Panc1 (cell line): ENCODE measurements at regions of chr4 and their contacts with region 1.

Region 1: DNA sequence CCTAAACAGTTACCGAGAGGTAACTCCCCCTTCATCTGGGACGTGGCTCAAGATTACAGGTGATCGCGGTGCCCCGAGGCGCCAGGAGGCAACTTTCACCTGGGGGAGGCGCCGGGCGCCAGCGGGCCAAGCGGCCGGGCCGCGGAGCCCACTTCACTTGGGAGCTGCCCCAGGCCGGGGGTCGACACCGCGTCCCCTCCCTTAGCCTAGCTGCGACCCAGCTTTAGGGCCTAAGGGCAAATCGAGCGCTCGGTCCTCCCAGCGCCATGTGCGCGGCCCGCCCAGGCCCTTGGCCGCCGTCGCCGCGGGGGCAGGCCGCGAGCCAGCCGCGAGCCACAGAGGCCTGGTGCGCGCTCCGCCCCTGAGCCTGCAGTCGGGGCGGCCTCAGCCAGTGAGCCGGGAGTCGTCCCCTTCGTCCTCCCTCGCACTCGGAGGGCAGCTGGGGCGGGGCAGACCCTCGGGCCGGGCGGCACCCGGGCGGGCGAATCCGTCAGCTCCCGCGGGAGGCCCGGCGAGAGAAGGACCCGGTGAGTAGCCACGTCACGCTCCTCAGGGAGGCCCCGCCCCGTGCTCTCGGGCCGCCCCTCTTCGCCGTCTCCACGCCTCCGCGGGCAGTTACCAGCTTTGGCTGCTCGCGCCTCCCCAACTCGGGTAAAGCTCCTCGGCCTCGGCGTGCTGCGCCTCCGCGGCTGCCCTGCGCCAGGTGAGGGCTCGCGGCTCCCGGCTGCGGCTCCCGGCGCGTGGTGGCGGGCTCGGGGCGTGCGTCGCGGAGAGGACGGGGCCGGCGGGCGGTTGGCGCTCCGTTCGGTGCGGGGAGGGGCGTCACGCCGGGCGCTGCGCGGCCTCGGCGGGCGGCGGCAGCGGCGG is at the start of gene LARP1B:
- DNase-seq: no peak
- ATAC-seq: peak; percentile 95
- H3K4me3 ChIP-seq: peak within 1 kb of the TSS; percentile 71 to 73
- H3K27ac ChIP-seq: peak within 1 kb of the TSS; percentile 84
- H3K4me1 ChIP-seq: peaks cover 6% of the 10 kb centered on the region; the same call in 1 of the 2 replicates
- H3K27me3 ChIP-seq: no peaks in the 10 kb centered on the region
- CTCF ChIP-seq: no peak
- total RNA-seq, gene LARP1B: 17.3 TPM

Region 2: GRCh38 chr4:127844601-127845116 is 216.3 kb before region 1 on chr4:
- CTCF ChIA-PET with region 1: no interaction called
- POLR2A ChIA-PET with region 1: no interaction called
- in situ Hi-C with region 1: no loop called
- intact Hi-C with region 1: no loop called
- DNase-seq: no peak
- ATAC-seq: peak; percentile 42; the same call in 1 of the 2 replicates
- H3K4me3 ChIP-seq: no peak overlapping the region
- H3K27ac ChIP-seq: no peak overlapping the region
- H3K4me1 ChIP-seq: no peaks in the 10 kb centered on the region
- H3K27me3 ChIP-seq: no peaks in the 10 kb centered on the region
- CTCF ChIP-seq: no peak

Region 3: GRCh38 chr4:128163177-128164117 is 102.5 kb after region 1 on chr4:
- CTCF ChIA-PET with region 1: no interaction called
- POLR2A ChIA-PET with region 1: interaction called, 3 read pairs
- in situ Hi-C with region 1: no loop called
- intact Hi-C with region 1: loop called (anchors 5 kb)
- DNase-seq: peak; percentile 71
- ATAC-seq: peak; percentile 86
- H3K4me3 ChIP-seq: 0 out of 4 replicates have a peak overlapping the region, but pooled peaks of 1 of the 2 experiments have one; percentile 17
- H3K27ac ChIP-seq: peak overlapping the region; percentile 87
- H3K4me1 ChIP-seq: peaks cover 52% of the 10 kb centered on the region
- H3K27me3 ChIP-seq: no peaks in the 10 kb centered on the region
- CTCF ChIP-seq: no peak

Region 4: GRCh38 chr4:128177498-128177897 is 116.6 kb after region 1 on chr4:
- CTCF ChIA-PET with region 1: no interaction called
- POLR2A ChIA-PET with region 1: no interaction called
- in situ Hi-C with region 1: no loop called
- intact Hi-C with region 1: no loop called
- DNase-seq: no peak
- ATAC-seq: no peak
- H3K4me3 ChIP-seq: no peak overlapping the region
- H3K27ac ChIP-seq: no peak overlapping the region; the same call in 1 of the 2 replicates
- H3K4me1 ChIP-seq: no peaks in the 10 kb centered on the region; the same call in 1 of the 2 replicates
- H3K27me3 ChIP-seq: no peaks in the 10 kb centered on the region
- CTCF ChIP-seq: no peak